CD8-positive, alpha-beta T cell (primary cell): ENCODE measurements at regions of chr6 and their contacts with region 1.

Region 1: DNA sequence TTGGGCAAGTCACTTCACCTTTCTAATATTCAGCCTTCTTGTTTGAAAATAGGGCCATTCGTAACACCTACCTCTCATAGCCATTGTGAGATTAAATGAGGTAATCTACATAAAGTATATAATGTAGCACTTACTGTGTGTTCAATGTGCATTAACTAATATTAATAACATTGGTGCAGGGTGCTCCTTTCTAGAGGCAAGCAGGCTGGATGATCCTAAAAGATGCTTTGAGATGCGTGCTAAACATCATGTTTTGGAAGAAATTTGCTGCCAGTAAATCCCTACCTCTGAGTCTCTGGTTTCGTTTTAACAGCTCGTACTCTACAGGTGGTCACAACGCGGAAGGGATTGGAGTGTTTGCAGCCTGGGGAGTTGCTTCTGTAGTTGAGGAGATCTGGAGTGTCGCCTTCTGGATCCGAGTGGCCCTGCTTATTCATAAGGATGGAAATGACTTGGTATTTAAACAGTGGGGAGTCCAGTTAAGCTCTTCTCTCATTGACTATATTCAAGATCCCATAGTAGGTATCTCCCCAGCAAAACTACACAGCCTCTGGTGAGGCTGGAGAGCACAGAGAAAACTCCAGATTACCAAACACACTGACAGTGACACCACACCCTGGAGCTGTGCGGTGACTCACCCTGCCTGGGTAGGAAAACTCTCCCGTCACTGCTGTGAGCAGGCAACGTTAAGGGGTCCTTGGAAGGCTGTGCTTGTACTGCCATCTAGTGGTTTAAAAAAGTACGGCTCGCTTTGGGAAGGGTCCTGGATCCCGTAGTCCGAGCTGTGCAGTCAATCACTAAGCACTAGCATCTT is 107.9 kb downstream of the MAP3K7 start:
- DNase-seq: peak; percentile 51 to 91 (median 81)
- ATAC-seq: peak; percentile 99
- H3K4me3 ChIP-seq: no peak overlapping the region
- H3K4me3 Mint-ChIP-seq: no peak overlapping the region
- H3K27ac ChIP-seq: no peak overlapping the region
- H3K27ac Mint-ChIP-seq: peak overlapping the region; percentile 10
- H3K4me1 ChIP-seq: peaks cover 11% of the 10 kb centered on the region
- H3K4me1 Mint-ChIP-seq: peaks cover 19% of the 10 kb centered on the region
- H3K27me3 ChIP-seq: no peaks in the 10 kb centered on the region
- H3K27me3 Mint-ChIP-seq: no peaks in the 10 kb centered on the region
- CTCF ChIP-seq: peak; percentile 88

Region 2: DNA sequence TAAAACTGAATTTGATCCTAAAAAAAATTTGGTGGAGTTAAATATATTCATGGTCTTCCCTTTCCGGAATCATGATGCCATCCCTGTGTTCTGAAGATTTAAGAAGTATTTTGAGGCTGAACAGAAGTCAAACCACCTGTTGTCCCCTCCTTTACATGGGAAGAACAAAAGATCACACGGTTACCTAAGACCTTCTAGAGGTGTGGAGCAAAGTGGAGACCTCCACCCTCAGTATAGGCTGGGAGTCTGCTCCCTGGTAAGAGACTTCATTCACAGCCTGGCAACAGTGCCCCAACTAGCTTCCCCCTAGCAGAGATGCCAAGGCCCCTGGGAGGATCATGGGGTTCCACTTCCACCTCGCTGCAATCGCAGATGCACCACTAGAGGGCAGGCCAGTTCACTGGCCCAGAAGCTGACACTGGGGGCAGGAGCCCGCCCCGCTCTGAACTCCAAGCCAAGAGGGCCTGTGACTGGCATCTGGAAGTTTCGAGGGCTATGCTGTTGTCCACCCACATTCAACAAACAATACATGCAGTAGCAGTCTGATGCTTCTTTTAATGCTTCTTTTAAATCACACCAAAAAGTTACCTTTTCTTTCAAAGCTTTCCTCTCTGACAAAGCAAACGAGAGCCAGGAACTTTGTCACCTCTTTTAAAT is 1107.0 kb before region 1 on chr6:
- CTCF ChIA-PET with region 1: interaction called, 3 read pairs
- POLR2A ChIA-PET with region 1: no interaction called
- intact Hi-C with region 1: loop called in 1 of 2 experiments (anchors 5 kb)
- DNase-seq: peak; percentile 67 to 88 (median 81)
- ATAC-seq: peak; percentile 59
- H3K4me3 ChIP-seq: no peak overlapping the region
- H3K4me3 Mint-ChIP-seq: no peak overlapping the region
- H3K27ac ChIP-seq: no peak overlapping the region
- H3K27ac Mint-ChIP-seq: peak overlapping the region; percentile 72
- H3K4me1 ChIP-seq: peaks cover 21% of the 10 kb centered on the region
- H3K4me1 Mint-ChIP-seq: peaks cover 28% of the 10 kb centered on the region
- H3K27me3 ChIP-seq: peaks cover 0 to 2% of the 10 kb centered on the region in 2 experiments
- H3K27me3 Mint-ChIP-seq: no peaks in the 10 kb centered on the region
- CTCF ChIP-seq: peak; percentile 91

Region 3: DNA sequence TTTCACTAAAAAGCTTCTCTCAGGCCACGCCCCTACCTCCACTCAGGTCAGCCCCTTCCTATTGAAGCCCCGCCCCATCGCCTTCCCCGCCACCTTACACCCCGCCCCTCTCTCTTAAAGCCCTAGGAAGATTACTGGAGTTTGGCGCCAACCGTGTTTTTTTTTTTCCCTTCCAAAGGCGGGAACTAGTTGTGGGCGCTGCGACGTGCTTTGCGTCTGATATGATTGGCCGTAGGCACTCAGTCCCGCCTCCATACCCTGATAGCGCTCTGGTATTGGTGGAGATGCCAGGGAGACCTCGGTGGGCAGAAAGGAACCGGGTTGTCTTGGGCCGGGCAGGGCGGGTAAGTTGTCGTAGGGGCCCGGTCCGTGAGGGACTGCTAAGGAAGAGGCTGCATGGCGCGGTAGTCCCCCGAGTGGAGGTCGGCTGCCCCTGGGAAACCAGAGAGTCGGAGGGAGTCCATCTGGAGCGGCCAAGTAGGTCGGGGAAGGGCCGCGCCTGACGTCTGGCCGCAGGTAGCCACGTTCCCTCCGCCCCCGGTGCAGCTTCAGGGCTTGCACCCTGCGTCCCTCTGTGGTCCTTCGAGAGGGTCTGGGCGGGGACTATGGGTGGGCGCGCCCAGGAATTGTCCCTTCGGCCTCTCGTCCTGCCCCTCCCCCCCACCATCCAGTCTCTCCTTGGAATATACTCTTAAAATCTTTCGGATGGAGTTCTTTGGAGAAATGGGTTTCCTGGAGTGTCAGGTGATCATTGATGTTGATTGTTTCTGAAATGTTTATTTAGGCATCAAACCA is 649.2 kb before region 1 on chr6 and contains the start of gene CASP8AP2:
- CTCF ChIA-PET with region 1: interaction called, 3 read pairs
- POLR2A ChIA-PET with region 1: no interaction called
- intact Hi-C with region 1: loop called in 1 of 2 experiments (anchors 5 kb)
- DNase-seq: peak; percentile 88 to 99 (median 93)
- ATAC-seq: peak; percentile 94
- H3K4me3 ChIP-seq: peak within 1 kb of the TSS; percentile 82 to 95
- H3K4me3 Mint-ChIP-seq: peak within 1 kb of the TSS; percentile 99
- H3K27ac ChIP-seq: peak within 1 kb of the TSS; percentile 71 to 84
- H3K27ac Mint-ChIP-seq: peak within 1 kb of the TSS; percentile 97
- H3K4me1 ChIP-seq: peaks cover 14% of the 10 kb centered on the region
- H3K4me1 Mint-ChIP-seq: peaks cover 35% of the 10 kb centered on the region
- H3K27me3 ChIP-seq: no peaks in the 10 kb centered on the region
- H3K27me3 Mint-ChIP-seq: no peaks in the 10 kb centered on the region
- CTCF ChIP-seq: no peak
- total RNA-seq, gene CASP8AP2: 13.1 to 14.8 TPM

Region 4: DNA sequence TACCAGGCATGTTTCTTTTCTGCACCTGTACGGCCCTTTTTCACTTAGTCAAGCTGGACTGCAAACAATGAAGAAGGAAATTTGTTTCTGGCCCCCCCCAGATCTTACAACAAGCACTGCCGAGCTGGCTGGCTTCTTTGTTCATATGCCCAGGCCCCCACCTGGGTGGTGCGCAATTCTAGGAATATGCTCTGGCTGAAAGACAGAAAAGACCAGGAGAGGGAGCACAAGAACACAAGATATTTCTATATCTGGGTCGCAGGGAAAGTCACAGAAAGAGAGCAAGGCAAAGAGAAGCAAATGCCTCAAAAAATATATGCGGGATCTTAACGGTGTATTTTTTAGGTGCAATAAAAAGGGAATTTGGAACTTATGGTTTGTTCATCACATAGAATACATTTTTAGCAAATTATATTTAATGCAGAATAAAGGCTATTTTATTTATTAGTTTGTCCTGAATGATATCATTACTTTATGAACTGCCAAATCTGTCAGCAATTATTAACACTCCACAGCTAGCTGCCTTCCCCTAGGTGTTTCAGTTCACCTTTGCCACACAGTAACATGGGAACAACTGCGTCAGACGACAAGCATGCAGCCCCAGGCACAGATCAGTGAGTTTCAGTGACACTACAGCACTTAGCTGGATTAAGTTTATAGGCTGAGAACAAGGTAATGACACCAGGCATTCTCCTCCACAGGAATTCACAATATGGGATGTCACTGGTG is 508.2 kb before region 1 on chr6:
- CTCF ChIA-PET with region 1: interaction called, 15 read pairs
- POLR2A ChIA-PET with region 1: no interaction called
- intact Hi-C with region 1: loop called in 1 of 2 experiments (anchors 1 kb)
- DNase-seq: peak in 2 of 9 experiments; percentile 49 to 63
- ATAC-seq: peak; percentile 65
- H3K4me3 ChIP-seq: no peak overlapping the region
- H3K4me3 Mint-ChIP-seq: no peak overlapping the region
- H3K27ac ChIP-seq: no peak overlapping the region
- H3K27ac Mint-ChIP-seq: no peak overlapping the region
- H3K4me1 ChIP-seq: peaks cover 9% of the 10 kb centered on the region
- H3K4me1 Mint-ChIP-seq: peaks cover 26% of the 10 kb centered on the region
- H3K27me3 ChIP-seq: no peaks in the 10 kb centered on the region
- H3K27me3 Mint-ChIP-seq: no peaks in the 10 kb centered on the region
- CTCF ChIP-seq: peak; percentile 39

Region 5: GRCh38 chr6:90216072-90216977 is 262.7 kb before region 1 on chr6:
- CTCF ChIA-PET with region 1: interaction called, 6 read pairs
- POLR2A ChIA-PET with region 1: no interaction called
- intact Hi-C with region 1: loop called (anchors 1 to 10 kb)
- DNase-seq: peak in 7 of 9 experiments; percentile 21 to 84 (median 62)
- ATAC-seq: peak; percentile 29
- H3K4me3 ChIP-seq: peak overlapping the region in 1 of 2 experiments; percentile 16
- H3K4me3 Mint-ChIP-seq: peak overlapping the region; percentile 21
- H3K27ac ChIP-seq: peak overlapping the region; percentile 39 to 71
- H3K27ac Mint-ChIP-seq: no peak overlapping the region
- H3K4me1 ChIP-seq: peaks cover 100% of the 10 kb centered on the region
- H3K4me1 Mint-ChIP-seq: peaks cover 31% of the 10 kb centered on the region
- H3K27me3 ChIP-seq: no peaks in the 10 kb centered on the region
- H3K27me3 Mint-ChIP-seq: no peaks in the 10 kb centered on the region
- CTCF ChIP-seq: no peak

Region 6: GRCh38 chr6:90454836-90455427 is 24.1 kb before region 1 on chr6:
- CTCF ChIA-PET with region 1: interaction called, 11 read pairs
- POLR2A ChIA-PET with region 1: no interaction called
- intact Hi-C with region 1: no loop called
- DNase-seq: no peak
- ATAC-seq: no peak
- H3K4me3 ChIP-seq: no peak overlapping the region
- H3K4me3 Mint-ChIP-seq: no peak overlapping the region
- H3K27ac ChIP-seq: no peak overlapping the region
- H3K27ac Mint-ChIP-seq: no peak overlapping the region
- H3K4me1 ChIP-seq: peaks cover 19% of the 10 kb centered on the region
- H3K4me1 Mint-ChIP-seq: peaks cover 15% of the 10 kb centered on the region
- H3K27me3 ChIP-seq: no peaks in the 10 kb centered on the region
- H3K27me3 Mint-ChIP-seq: no peaks in the 10 kb centered on the region
- CTCF ChIP-seq: no peak

Region 7: GRCh38 chr6:90508753-90509152 is 29.8 kb after region 1 on chr6:
- CTCF ChIA-PET with region 1: no interaction called
- POLR2A ChIA-PET with region 1: no interaction called
- intact Hi-C with region 1: no loop called
- DNase-seq: no peak
- ATAC-seq: no peak
- H3K4me3 ChIP-seq: no peak overlapping the region
- H3K4me3 Mint-ChIP-seq: no peak overlapping the region
- H3K27ac ChIP-seq: no peak overlapping the region
- H3K27ac Mint-ChIP-seq: no peak overlapping the region
- H3K4me1 ChIP-seq: no peaks in the 10 kb centered on the region
- H3K4me1 Mint-ChIP-seq: no peaks in the 10 kb centered on the region
- H3K27me3 ChIP-seq: no peaks in the 10 kb centered on the region
- H3K27me3 Mint-ChIP-seq: no peaks in the 10 kb centered on the region
- CTCF ChIP-seq: no peak

Region 8: DNA sequence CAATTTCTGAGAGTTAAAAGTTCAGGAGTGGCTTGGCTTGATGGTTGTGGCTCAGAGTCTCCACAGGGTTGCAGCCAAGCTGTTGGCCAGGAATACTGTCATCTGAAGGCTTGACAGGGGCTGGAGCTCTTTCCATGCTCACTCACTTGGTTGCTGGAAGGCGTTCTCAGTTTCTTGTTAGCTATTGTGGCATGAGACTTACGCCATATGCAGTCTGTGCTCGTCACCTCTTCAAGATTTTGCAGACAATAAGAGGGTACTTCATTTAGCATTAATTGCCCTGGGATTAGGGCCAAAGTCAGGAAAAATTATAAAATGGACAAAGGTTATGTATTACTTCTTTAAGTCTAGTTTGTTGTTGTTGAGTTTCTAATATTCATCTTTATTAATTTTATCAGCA is 488.5 kb after region 1 on chr6:
- CTCF ChIA-PET with region 1: no interaction called
- POLR2A ChIA-PET with region 1: no interaction called
- intact Hi-C with region 1: no loop called
- DNase-seq: no peak
- ATAC-seq: no peak
- H3K4me3 ChIP-seq: no peak overlapping the region
- H3K4me3 Mint-ChIP-seq: no peak overlapping the region
- H3K27ac ChIP-seq: no peak overlapping the region
- H3K27ac Mint-ChIP-seq: no peak overlapping the region
- H3K4me1 ChIP-seq: no peaks in the 10 kb centered on the region
- H3K4me1 Mint-ChIP-seq: no peaks in the 10 kb centered on the region
- H3K27me3 ChIP-seq: no peaks in the 10 kb centered on the region
- H3K27me3 Mint-ChIP-seq: peaks cover 6% of the 10 kb centered on the region
- CTCF ChIP-seq: no peak

Region 9: GRCh38 chr6:92069781-92070180 is 1590.8 kb after region 1 on chr6:
- CTCF ChIA-PET with region 1: no interaction called
- POLR2A ChIA-PET with region 1: no interaction called
- intact Hi-C with region 1: no loop called
- DNase-seq: no peak
- ATAC-seq: no peak
- H3K4me3 ChIP-seq: no peak overlapping the region
- H3K4me3 Mint-ChIP-seq: no peak overlapping the region
- H3K27ac ChIP-seq: no peak overlapping the region
- H3K27ac Mint-ChIP-seq: no peak overlapping the region
- H3K4me1 ChIP-seq: no peaks in the 10 kb centered on the region
- H3K4me1 Mint-ChIP-seq: no peaks in the 10 kb centered on the region
- H3K27me3 ChIP-seq: no peaks in the 10 kb centered on the region
- H3K27me3 Mint-ChIP-seq: no peaks in the 10 kb centered on the region
- CTCF ChIP-seq: no peak